Dendritic cell treated with granulocyte-macrophage colony-stimulating factor and Interleukin-4, amounts not matched to agents 40 ng/mL and 50 ng/mL, for 4 days (primary cell): ENCODE measurements at regions of chr1 and their contacts with region 1.

Region 1: GRCh38 chr1:67853704-67854103 is 20.4 kb upstream of the GNG12 start:
- H3K4me3 Mint-ChIP-seq: no peak overlapping the region
- H3K27ac Mint-ChIP-seq: no peak overlapping the region
- H3K4me1 Mint-ChIP-seq: peaks cover 5% of the 10 kb centered on the region
- H3K27me3 Mint-ChIP-seq: peaks cover 11% of the 10 kb centered on the region

Region 2: DNA sequence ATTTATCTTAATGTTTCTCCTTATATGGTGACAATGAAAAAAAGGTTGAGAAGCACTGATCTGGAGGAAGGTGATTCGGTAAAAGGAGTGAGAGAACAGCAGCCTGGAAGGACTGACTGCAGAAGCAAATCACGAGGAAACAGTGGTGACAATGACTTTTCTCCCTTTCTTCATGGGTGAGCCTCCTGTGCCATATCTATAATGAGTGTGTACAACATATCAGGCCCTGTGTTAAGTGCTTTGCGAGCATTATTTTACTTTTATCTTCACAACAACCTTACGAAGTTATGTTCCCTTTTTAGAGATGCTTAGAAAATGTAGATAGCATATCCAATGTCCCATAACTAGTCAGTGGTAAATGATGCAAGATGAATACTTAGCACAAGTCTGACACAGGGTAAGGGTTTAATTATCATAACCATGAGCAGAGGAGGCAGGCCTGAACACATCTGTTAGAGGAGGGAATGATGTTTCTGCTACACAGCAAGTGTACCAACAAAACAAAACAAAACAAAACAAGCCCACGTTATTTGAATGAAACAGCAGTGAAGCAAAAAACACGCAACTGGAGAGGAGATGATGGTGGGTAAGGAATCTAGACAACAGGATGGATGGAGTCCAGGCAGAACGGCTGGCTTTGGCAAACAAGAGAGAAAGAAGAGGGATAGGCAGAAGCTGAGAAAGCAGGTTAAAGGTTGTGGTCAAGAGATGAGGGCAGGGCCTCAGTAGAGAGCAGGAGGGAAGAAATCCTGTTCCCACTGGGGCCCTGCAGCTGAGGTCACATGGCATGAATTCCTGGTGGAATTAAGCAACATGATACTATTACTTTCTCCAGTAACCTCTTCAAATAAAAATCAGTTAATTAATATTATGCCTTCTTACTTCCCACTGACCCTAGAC is 50.1 kb before region 1 on chr1:
- intact Hi-C with region 1: no loop called
- H3K4me3 Mint-ChIP-seq: no peak overlapping the region
- H3K27ac Mint-ChIP-seq: no peak overlapping the region
- H3K4me1 Mint-ChIP-seq: no peaks in the 10 kb centered on the region
- H3K27me3 Mint-ChIP-seq: peaks cover 6% of the 10 kb centered on the region

Region 3: GRCh38 chr1:68103884-68104554 is 250.3 kb after region 1 on chr1:
- intact Hi-C with region 1: loop called (anchors 10 kb)
- H3K4me3 Mint-ChIP-seq: no peak overlapping the region
- H3K27ac Mint-ChIP-seq: no peak overlapping the region
- H3K4me1 Mint-ChIP-seq: no peaks in the 10 kb centered on the region
- H3K27me3 Mint-ChIP-seq: no peaks in the 10 kb centered on the region